Posterior vena cava (tissue), 2 donors: ENCODE measurements at regions of chr15 and their contacts with region 1.

Region 1: DNA sequence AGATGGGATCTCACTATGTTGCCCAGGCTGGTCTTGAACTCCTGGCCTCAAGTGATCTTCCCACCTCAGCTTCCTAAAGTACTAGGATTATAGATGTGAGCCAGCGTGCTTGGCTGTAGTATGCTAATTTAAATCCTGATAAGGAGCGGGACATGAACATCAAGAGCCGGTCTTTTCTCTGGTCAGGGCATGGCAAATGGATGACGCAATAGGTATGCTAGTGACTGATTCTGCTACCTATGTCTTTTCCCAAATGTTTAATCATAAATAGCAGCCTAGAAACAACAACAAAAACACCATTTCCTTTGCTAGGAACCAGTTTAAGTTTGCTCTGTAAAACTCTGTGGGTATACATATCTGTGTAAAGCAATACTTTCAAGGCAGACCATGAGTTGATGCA is 64.7 kb downstream of the STARD9 start:
- DNase-seq: no peak

Region 2: GRCh38 chr15:42575188-42576039 is 64.7 kb before region 1 on chr15 and contains the start of gene STARD9:
- intact Hi-C with region 1: loop called in 1 of 2 experiments (anchors 10 kb)
- DNase-seq: peak; percentile 99
- total RNA-seq, gene STARD9: 19.0 to 20.8 TPM